GM23248 (cell line): ENCODE measurements at regions of chr6 and their contacts with region 1.

Region 1: GRCh38 chr6:111873178-111874024 is at the start of gene FYN:
- DNase-seq: peak; percentile 100
- H3K4me3 ChIP-seq: peak within 1 kb of the TSS; percentile 84
- H3K27ac ChIP-seq: peak within 1 kb of the TSS; percentile 77
- H3K4me1 ChIP-seq: peaks cover 34% of the 10 kb centered on the region
- H3K27me3 ChIP-seq: no peaks in the 10 kb centered on the region
- total RNA-seq, gene FYN: 166 and 177 TPM in 2 replicates

Region 2: GRCh38 chr6:111417181-111417585 is 456.2 kb before region 1 on chr6:
- in situ Hi-C with region 1: no loop called
- DNase-seq: peak; percentile 62
- H3K4me3 ChIP-seq: no peak overlapping the region
- H3K27ac ChIP-seq: peak overlapping the region; percentile 42
- H3K4me1 ChIP-seq: peaks cover 40% of the 10 kb centered on the region
- H3K27me3 ChIP-seq: no peaks in the 10 kb centered on the region

Region 3: DNA sequence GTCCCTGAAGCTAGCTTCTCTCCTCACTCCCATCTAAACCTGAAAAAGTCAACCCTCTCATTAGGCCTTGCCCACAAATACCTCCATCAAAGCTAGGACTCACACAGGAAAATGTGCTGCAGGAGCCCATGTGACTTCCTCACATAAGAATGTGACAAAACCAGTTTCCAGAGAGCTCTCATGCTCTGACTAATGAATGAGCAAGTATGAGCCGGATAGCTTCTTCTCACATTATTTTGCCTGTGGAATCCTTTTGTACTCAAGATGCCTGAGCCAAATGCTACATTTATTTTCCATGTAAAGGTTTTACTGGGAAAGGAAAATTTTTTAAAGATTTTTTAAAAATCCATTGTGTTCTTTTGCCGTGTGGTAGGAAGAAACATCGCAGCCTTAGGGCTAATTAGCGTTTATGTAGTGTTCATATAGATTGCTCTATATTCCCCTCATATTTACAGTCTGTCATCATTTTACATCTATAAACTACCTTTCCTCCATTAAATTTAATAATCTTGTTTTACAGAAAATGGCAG is 111.9 kb after region 1 on chr6:
- in situ Hi-C with region 1: loop called (anchors 10 kb)
- DNase-seq: peak; percentile 98
- H3K4me3 ChIP-seq: no peak overlapping the region
- H3K27ac ChIP-seq: peak overlapping the region; percentile 95
- H3K4me1 ChIP-seq: peaks cover 30% of the 10 kb centered on the region
- H3K27me3 ChIP-seq: no peaks in the 10 kb centered on the region